Activated CD4-positive, alpha-beta memory T cell treated with anti-CD3 and anti-CD28 coated beads for 36 hours (primary cell): ENCODE measurements at regions of chr17 and their contacts with region 1.

Region 1: GRCh38 chr17:59829217-59830006 is 63.3 kb downstream of the TUBD1 start:
- DNase-seq: peak; percentile 66
- H3K4me3 Mint-ChIP-seq: peak overlapping the region; percentile 79
- H3K27ac Mint-ChIP-seq: peak overlapping the region; percentile 100
- H3K4me1 Mint-ChIP-seq: peaks cover 64% of the 10 kb centered on the region
- H3K27me3 Mint-ChIP-seq: no peaks in the 10 kb centered on the region

Region 2: GRCh38 chr17:58329035-58329809 is 1500.2 kb before region 1 on chr17:
- CTCF ChIA-PET with region 1: no interaction called
- POLR2A ChIA-PET with region 1: interaction called, 3 read pairs
- intact Hi-C with region 1: loop called (anchors 5 kb)
- DNase-seq: peak; percentile 92
- H3K4me3 Mint-ChIP-seq: peak overlapping the region; percentile 92
- H3K27ac Mint-ChIP-seq: peak overlapping the region; percentile 98
- H3K4me1 Mint-ChIP-seq: peaks cover 44% of the 10 kb centered on the region
- H3K27me3 Mint-ChIP-seq: peaks cover 25% of the 10 kb centered on the region

Region 3: DNA sequence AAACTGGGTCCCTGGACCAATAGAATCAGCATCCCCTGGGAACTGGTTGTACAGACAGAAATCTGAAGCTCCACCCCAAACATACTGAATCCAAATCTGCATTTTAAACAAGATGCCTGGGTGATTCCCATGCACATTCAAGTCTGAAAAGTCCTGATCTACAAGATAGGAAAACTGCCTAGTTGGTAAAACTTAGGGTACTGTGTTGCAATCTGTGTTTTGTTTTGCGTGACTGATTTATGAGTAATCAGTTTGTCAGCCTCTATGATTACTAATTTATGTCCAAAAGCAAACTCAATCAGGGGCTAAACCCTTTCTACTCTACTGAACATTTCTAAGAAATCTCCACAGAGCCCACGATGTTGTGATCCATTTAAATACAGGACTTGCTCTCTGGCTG is 394.2 kb before region 1 on chr17:
- CTCF ChIA-PET with region 1: no interaction called
- POLR2A ChIA-PET with region 1: no interaction called
- intact Hi-C with region 1: loop called (anchors 10 kb)
- DNase-seq: no peak
- H3K4me3 Mint-ChIP-seq: no peak overlapping the region
- H3K27ac Mint-ChIP-seq: peak overlapping the region; percentile 89
- H3K4me1 Mint-ChIP-seq: peaks cover 61% of the 10 kb centered on the region
- H3K27me3 Mint-ChIP-seq: peaks cover 6% of the 10 kb centered on the region

Region 4: GRCh38 chr17:59762513-59763374 is 66.7 kb before region 1 on chr17:
- CTCF ChIA-PET with region 1: interaction called, 4 read pairs
- POLR2A ChIA-PET with region 1: interaction called, 242 read pairs
- intact Hi-C with region 1: loop called (anchors 1 kb)
- DNase-seq: peak; percentile 24
- H3K4me3 Mint-ChIP-seq: peak overlapping the region; percentile 48
- H3K27ac Mint-ChIP-seq: peak overlapping the region; percentile 97
- H3K4me1 Mint-ChIP-seq: peaks cover 61% of the 10 kb centered on the region
- H3K27me3 Mint-ChIP-seq: no peaks in the 10 kb centered on the region

Region 5: DNA sequence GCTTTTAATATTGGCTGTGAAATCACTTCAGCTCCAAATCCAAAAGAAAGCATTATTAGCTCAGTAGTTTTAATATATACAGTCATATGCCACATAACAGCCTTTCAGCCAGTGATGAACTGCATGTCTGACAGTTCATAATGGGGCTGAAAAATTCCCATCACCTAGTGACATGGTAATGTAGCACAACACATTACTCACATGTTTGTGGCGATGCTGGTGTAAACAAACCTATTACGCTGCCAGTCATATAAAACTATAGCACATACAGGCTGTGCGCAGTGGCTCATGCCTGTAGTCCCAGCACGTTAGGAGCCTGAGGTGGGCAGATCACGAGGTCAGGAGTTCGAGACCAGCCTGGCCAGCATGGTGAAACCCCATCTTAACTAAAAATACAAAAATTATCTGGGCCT is 28.9 kb before region 1 on chr17:
- CTCF ChIA-PET with region 1: interaction called, 5 read pairs
- POLR2A ChIA-PET with region 1: interaction called, 34 read pairs
- intact Hi-C with region 1: no loop called
- DNase-seq: no peak
- H3K4me3 Mint-ChIP-seq: no peak overlapping the region
- H3K27ac Mint-ChIP-seq: peak overlapping the region; percentile 28
- H3K4me1 Mint-ChIP-seq: peaks cover 30% of the 10 kb centered on the region
- H3K27me3 Mint-ChIP-seq: no peaks in the 10 kb centered on the region

Region 6: GRCh38 chr17:59846394-59847165 is 17.2 kb after region 1 on chr17:
- CTCF ChIA-PET with region 1: interaction called, 5 read pairs
- POLR2A ChIA-PET with region 1: interaction called, 923 read pairs
- intact Hi-C with region 1: loop called (anchors 2 kb)
- DNase-seq: peak; percentile 31
- H3K4me3 Mint-ChIP-seq: peak overlapping the region; percentile 60
- H3K27ac Mint-ChIP-seq: peak overlapping the region; percentile 100
- H3K4me1 Mint-ChIP-seq: peaks cover 68% of the 10 kb centered on the region
- H3K27me3 Mint-ChIP-seq: peaks cover 2% of the 10 kb centered on the region

Region 7: GRCh38 chr17:59884861-59885260 is 55.4 kb after region 1 on chr17:
- CTCF ChIA-PET with region 1: no interaction called
- POLR2A ChIA-PET with region 1: no interaction called
- intact Hi-C with region 1: no loop called
- DNase-seq: no peak
- H3K4me3 Mint-ChIP-seq: no peak overlapping the region
- H3K27ac Mint-ChIP-seq: no peak overlapping the region
- H3K4me1 Mint-ChIP-seq: peaks cover 10% of the 10 kb centered on the region
- H3K27me3 Mint-ChIP-seq: no peaks in the 10 kb centered on the region